ENCODE measurements at regions of chr17 and their contacts with region 1.

Region 1: DNA sequence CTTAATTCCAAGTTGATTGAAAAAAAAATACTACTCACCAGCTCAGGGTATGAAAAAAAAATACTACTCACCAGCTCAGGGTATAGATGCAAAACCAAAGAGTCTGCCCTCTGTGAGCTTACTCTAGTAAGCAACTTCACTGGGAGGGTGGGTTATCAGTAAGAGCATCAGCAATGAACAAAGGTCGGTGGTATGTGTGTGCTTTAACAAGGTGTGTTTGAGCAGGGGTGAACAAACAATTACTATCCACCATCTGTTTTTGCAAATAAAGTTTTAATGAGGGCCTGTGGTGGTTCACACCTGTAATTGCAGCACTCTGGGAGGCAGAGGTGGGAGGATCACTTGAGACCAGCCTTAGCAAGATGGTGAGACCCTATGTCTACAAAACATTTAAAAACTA is 20.0 kb downstream of the NUFIP2 start:
- DNase-seq: no peak
- H3K4me3 ChIP-seq: no peak overlapping the region
- H3K27ac ChIP-seq: no peak overlapping the region
- H3K4me1 ChIP-seq: no peaks in the 10 kb centered on the region
- H3K27me3 ChIP-seq: no peaks in the 10 kb centered on the region
- CTCF ChIP-seq: no peak

Region 2: DNA sequence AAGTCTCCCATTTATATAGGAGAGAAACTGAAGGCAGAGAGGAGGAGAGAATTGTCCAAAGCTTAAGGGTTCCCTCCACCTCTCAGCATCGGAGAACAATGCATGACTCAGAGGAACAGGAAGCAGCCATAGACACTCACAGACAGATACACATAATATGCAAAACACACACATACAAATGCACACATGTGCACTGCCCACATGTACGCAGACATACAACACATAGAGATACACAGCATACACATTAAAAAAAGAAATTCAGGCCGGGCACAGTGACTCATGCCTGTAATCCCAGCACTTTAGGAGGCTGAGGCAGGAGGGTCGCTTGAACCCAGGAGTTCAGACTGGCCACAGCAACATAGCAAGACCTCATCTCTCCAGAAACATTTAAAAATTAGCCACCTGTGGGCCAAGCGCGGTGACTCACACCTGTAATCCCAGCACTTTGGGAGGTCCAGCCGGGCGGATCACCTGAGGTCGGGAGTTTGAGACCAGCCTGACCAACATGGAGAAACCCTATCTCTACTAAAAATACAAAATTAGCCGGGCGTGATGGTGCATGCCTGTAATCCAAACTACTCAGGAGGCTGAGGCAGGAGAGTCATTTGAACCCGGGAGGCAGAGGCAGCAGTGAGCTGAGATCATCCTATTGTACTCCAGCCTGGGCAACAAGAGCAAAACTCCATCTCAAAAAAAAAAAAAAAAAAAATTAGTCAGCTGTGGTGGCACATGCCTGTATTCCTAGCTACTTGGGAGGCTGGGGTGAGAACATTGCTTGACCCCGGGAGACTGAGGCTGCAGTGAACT is 407.8 kb before region 1 on chr17:
- CTCF ChIA-PET with region 1: no interaction called
- POLR2A ChIA-PET with region 1: no interaction called
- intact Hi-C with region 1: no loop called
- DNase-seq: peak; percentile 36
- H3K4me3 ChIP-seq: no peak overlapping the region
- H3K27ac ChIP-seq: no peak overlapping the region
- H3K4me1 ChIP-seq: no peaks in the 10 kb centered on the region
- H3K27me3 ChIP-seq: no peaks in the 10 kb centered on the region
- CTCF ChIP-seq: no peak

Region 3: DNA sequence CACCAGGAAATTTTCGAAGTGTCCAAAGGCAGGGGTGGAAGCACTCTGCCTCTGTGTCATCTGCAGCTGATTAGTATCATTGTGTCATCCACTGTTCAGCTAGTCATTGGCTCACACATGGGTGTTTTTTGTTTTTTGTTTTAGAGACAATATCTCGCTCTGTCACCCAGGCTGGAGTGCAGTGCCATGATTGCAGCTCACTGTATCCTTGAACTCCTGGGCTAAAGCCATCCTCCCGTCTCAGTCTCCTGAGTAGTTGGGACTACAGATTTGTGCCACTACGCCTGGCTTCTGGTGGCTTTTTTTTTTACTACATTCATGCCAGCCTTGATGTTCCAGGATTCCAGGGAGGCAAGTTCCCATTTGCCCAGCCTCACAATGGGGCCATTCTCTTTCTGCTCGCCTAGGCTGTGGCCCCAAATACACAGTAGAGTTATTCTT is 61.2 kb before region 1 on chr17:
- CTCF ChIA-PET with region 1: no interaction called
- POLR2A ChIA-PET with region 1: no interaction called
- intact Hi-C with region 1: no loop called
- DNase-seq: no peak
- H3K4me3 ChIP-seq: no peak overlapping the region
- H3K27ac ChIP-seq: no peak overlapping the region
- H3K4me1 ChIP-seq: no peaks in the 10 kb centered on the region
- H3K27me3 ChIP-seq: no peaks in the 10 kb centered on the region
- CTCF ChIP-seq: no peak

Region 4: GRCh38 chr17:29430275-29430674 is 156.4 kb after region 1 on chr17:
- CTCF ChIA-PET with region 1: no interaction called
- POLR2A ChIA-PET with region 1: no interaction called
- intact Hi-C with region 1: no loop called
- DNase-seq: no peak
- H3K4me3 ChIP-seq: no peak overlapping the region
- H3K27ac ChIP-seq: no peak overlapping the region
- H3K4me1 ChIP-seq: peaks cover 22% of the 10 kb centered on the region
- H3K27me3 ChIP-seq: no peaks in the 10 kb centered on the region
- CTCF ChIP-seq: no peak

Region 5: GRCh38 chr17:29579866-29580771 is 306.2 kb after region 1 on chr17:
- CTCF ChIA-PET with region 1: no interaction called
- POLR2A ChIA-PET with region 1: interaction called, 26 read pairs
- intact Hi-C with region 1: no loop called
- DNase-seq: peak; percentile 91
- H3K4me3 ChIP-seq: no peak overlapping the region
- H3K27ac ChIP-seq: no peak overlapping the region
- H3K4me1 ChIP-seq: peaks cover 12% of the 10 kb centered on the region
- H3K27me3 ChIP-seq: no peaks in the 10 kb centered on the region
- CTCF ChIP-seq: peak; percentile 93

Region 6: DNA sequence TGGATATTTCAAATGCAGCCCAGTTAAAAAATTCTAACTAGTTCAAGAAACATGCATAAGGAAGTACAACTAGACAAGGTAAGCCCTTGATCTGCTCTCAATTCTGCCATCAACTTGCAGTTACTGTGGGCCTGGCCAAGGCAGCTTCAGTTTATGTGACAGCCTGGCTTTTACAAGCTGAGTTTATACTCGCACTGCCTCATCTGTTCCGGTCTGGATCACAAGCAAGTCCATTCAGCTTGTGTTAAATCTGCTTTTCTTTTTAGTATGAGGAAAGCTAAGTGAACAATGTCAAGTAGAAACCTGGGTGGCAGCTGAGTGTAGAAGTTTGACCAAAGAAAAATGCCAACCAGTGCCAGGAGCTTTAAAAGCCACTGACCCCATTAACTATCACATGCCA is 425.4 kb after region 1 on chr17:
- CTCF ChIA-PET with region 1: no interaction called
- POLR2A ChIA-PET with region 1: no interaction called
- intact Hi-C with region 1: no loop called
- DNase-seq: no peak
- H3K4me3 ChIP-seq: no peak overlapping the region
- H3K27ac ChIP-seq: peak overlapping the region; percentile 4
- H3K4me1 ChIP-seq: peaks cover 30% of the 10 kb centered on the region
- H3K27me3 ChIP-seq: no peaks in the 10 kb centered on the region
- CTCF ChIP-seq: no peak

Measured in A673 (cell line).